ENCODE measurements at regions of chr12 and their contacts with region 1.

Region 1: DNA sequence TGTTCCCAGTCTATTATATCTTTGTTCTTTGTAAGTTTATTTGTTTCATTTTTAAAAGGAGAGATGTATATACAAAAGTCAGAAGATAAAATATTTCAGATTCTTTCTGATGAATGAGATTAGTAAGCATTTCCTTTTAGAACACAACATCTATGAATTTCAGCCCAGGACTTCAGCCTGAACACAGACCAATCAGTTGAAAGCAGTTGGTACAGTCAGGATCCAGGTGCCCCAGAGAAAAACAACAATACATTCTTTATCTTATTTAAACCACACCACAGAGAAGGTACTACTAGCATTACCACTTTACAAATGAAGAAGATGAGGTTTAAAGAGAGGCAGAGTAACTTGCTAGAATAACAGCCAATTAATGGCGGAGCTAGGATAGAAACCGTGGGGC is 114.2 kb upstream of the BTG1 start:
- DNase-seq: peak in 1 of 9 donors; percentile 8
- ATAC-seq: no peak
- H3K4me3 ChIP-seq: no peak overlapping the region
- H3K4me3 Mint-ChIP-seq: peak overlapping the region in 9 of 10 donors; percentile 2 to 77 (median 53)
- H3K27ac ChIP-seq: peak overlapping the region; percentile 37
- H3K27ac Mint-ChIP-seq: peak overlapping the region in 8 of 9 donors; percentile 33 to 91 (median 87)
- H3K4me1 ChIP-seq: peaks cover 0 to 13% of the 10 kb centered on the region in 2 donors
- H3K4me1 Mint-ChIP-seq: peaks cover 16 to 60% (median 44%) of the 10 kb centered on the region in 7 donors
- H3K27me3 ChIP-seq: no peaks in the 10 kb centered on the region
- H3K27me3 Mint-ChIP-seq: no peaks in the 10 kb centered on the region

Region 2: GRCh38 chr12:91926848-91927247 is 333.0 kb before region 1 on chr12:
- CTCF ChIA-PET with region 1: no interaction called
- POLR2A ChIA-PET with region 1: no interaction called
- intact Hi-C with region 1: no loop called
- DNase-seq: no peak
- ATAC-seq: no peak
- H3K4me3 ChIP-seq: no peak overlapping the region
- H3K4me3 Mint-ChIP-seq: no peak overlapping the region
- H3K27ac ChIP-seq: no peak overlapping the region
- H3K27ac Mint-ChIP-seq: no peak overlapping the region
- H3K4me1 ChIP-seq: peaks cover 0 to 1% of the 10 kb centered on the region in 2 donors
- H3K4me1 Mint-ChIP-seq: peaks cover 0 to 27% (median 12%) of the 10 kb centered on the region in 7 donors
- H3K27me3 ChIP-seq: no peaks in the 10 kb centered on the region
- H3K27me3 Mint-ChIP-seq: no peaks in the 10 kb centered on the region

Region 3: DNA sequence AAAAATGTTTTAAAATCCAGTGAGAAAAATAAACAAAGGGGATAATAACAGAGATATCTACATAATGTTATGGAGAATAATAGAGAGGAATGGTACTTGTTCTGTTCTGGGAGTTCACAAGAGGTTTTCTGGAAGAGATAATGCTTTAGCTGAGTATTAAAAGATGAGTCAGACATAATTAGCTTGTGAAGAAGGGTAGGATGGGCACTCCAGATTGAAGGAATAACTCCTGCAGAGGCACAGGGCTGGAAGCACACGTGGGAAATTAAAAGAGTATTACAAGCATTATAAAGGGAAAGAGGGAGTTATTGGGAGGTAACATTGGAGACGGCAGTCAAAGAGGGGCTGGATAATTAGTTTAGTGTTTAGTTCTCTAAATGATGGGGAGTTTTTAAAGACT is 10.7 kb after region 1 on chr12:
- CTCF ChIA-PET with region 1: no interaction called
- POLR2A ChIA-PET with region 1: interaction called, 7 read pairs
- intact Hi-C with region 1: loop called in 1 of 2 experiments (anchors 2 kb)
- DNase-seq: no peak
- ATAC-seq: no peak
- H3K4me3 ChIP-seq: no peak overlapping the region
- H3K4me3 Mint-ChIP-seq: no peak overlapping the region
- H3K27ac ChIP-seq: no peak overlapping the region
- H3K27ac Mint-ChIP-seq: peak overlapping the region in 1 of 9 donors; percentile 2
- H3K4me1 ChIP-seq: no peaks in the 10 kb centered on the region
- H3K4me1 Mint-ChIP-seq: peaks cover 5 to 36% (median 21%) of the 10 kb centered on the region in 7 donors
- H3K27me3 ChIP-seq: no peaks in the 10 kb centered on the region
- H3K27me3 Mint-ChIP-seq: no peaks in the 10 kb centered on the region

Measured in naive thymus-derived CD4-positive, alpha-beta T cell (primary cell).